Activated CD8-positive, alpha-beta T cell treated with anti-CD3 and anti-CD28 coated beads for 36 hours (primary cell): ENCODE measurements at regions of chr1 and their contacts with region 1.

Region 1: GRCh38 chr1:95084317-95085176 is 11.8 kb upstream of the ALG14 start:
- DNase-seq: peak; percentile 46
- ATAC-seq: peak; percentile 75
- H3K4me3 Mint-ChIP-seq: no peak overlapping the region
- H3K27ac Mint-ChIP-seq: no peak overlapping the region
- H3K4me1 Mint-ChIP-seq: no peaks in the 10 kb centered on the region
- H3K27me3 Mint-ChIP-seq: peaks cover 6% of the 10 kb centered on the region
- CTCF ChIP-seq: peak; percentile 82

Region 2: GRCh38 chr1:95072532-95073419 is 11.8 kb before region 1 on chr1 and contains the start of gene ALG14:
- CTCF ChIA-PET with region 1: interaction called, 47 read pairs
- POLR2A ChIA-PET with region 1: no interaction called
- intact Hi-C with region 1: no loop called
- DNase-seq: peak; percentile 95
- ATAC-seq: peak; percentile 93
- H3K4me3 Mint-ChIP-seq: peak within 1 kb of the TSS; percentile 93
- H3K27ac Mint-ChIP-seq: peak within 1 kb of the TSS; percentile 99
- H3K4me1 Mint-ChIP-seq: peaks cover 8% of the 10 kb centered on the region
- H3K27me3 Mint-ChIP-seq: no peaks in the 10 kb centered on the region
- CTCF ChIP-seq: no peak
- total RNA-seq, gene ALG14: 2.5 to 2.9 TPM

Region 3: GRCh38 chr1:95116580-95117206 is 32.1 kb after region 1 on chr1:
- CTCF ChIA-PET with region 1: interaction called, 23 read pairs
- POLR2A ChIA-PET with region 1: no interaction called
- intact Hi-C with region 1: no loop called
- DNase-seq: peak; percentile 69
- ATAC-seq: peak; percentile 78
- H3K4me3 Mint-ChIP-seq: peak overlapping the region; percentile 77
- H3K27ac Mint-ChIP-seq: peak overlapping the region; percentile 68
- H3K4me1 Mint-ChIP-seq: peaks cover 8% of the 10 kb centered on the region
- H3K27me3 Mint-ChIP-seq: peaks cover 54% of the 10 kb centered on the region
- CTCF ChIP-seq: peak; percentile 56